ENCODE measurements at regions of chr17 and their contacts with region 1.

Region 1: GRCh38 chr17:75069783-75070182 is 18.0 kb upstream of the SLC16A5 start:
- DNase-seq: peak; percentile 61
- H3K4me3 Mint-ChIP-seq: no peak overlapping the region
- H3K27ac Mint-ChIP-seq: no peak overlapping the region
- H3K4me1 Mint-ChIP-seq: peaks cover 5% of the 10 kb centered on the region
- H3K27me3 Mint-ChIP-seq: no peaks in the 10 kb centered on the region
- CTCF ChIP-seq: peak; percentile 47

Region 2: DNA sequence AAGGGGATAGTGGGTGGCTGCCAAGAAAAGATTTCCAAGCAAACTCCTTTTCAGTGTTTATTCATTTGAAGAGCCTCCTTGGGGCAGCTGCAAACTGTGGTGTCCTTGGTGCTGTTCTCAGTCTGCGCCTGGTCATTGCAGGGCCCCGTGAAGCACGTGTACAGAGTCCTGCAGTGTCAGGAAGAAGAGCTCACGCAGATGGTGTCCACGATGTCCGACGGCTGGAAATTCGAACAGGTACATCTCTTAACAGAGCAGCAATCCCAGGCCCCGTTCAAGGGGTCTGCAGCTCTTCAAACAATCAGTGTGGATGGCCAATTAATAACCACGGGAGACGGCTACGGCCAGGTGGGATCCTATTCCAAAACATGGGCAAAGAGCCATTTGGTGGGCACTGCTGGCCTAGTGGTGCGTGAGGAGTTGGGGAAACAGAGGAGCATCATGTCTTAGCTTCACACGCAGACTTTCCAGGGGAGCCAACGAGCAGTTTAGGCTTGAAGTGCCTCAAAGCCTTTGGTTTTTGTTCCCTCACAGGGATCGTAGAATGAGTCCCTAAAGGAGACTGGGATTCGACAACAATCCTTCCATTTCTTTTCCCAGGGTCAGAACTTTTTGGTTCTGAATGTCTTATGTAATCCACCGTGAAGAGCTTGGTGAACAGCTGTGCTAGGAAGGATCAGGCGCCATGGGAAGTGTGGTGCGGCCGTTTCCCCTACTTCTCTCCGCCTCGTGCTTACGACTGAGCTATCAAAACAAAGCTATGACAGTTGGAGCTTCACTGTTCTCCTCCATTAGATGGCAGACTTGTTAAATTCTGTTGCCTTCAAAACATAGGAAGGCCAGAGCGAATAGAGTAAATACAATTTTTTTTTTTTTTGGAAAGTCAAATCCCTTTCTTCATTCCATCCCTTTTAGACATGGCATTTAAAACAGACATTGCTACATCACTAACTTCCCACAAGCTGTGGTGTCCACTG is 10.1 kb before region 1 on chr17:
- CTCF ChIA-PET with region 1: interaction called, 38 read pairs
- POLR2A ChIA-PET with region 1: interaction called, 8 read pairs
- intact Hi-C with region 1: no loop called
- DNase-seq: no peak
- H3K4me3 Mint-ChIP-seq: no peak overlapping the region
- H3K27ac Mint-ChIP-seq: no peak overlapping the region
- H3K4me1 Mint-ChIP-seq: no peaks in the 10 kb centered on the region
- H3K27me3 Mint-ChIP-seq: no peaks in the 10 kb centered on the region
- CTCF ChIP-seq: peak; percentile 30

Region 3: GRCh38 chr17:75096082-75096625 is 26.4 kb after region 1 on chr17:
- CTCF ChIA-PET with region 1: interaction called, 10 read pairs
- POLR2A ChIA-PET with region 1: interaction called, 17 read pairs
- intact Hi-C with region 1: no loop called
- DNase-seq: peak; percentile 97
- H3K4me3 Mint-ChIP-seq: peak overlapping the region; percentile 62
- H3K27ac Mint-ChIP-seq: peak overlapping the region; percentile 98
- H3K4me1 Mint-ChIP-seq: peaks cover 35% of the 10 kb centered on the region
- H3K27me3 Mint-ChIP-seq: no peaks in the 10 kb centered on the region
- CTCF ChIP-seq: no peak

Region 4: DNA sequence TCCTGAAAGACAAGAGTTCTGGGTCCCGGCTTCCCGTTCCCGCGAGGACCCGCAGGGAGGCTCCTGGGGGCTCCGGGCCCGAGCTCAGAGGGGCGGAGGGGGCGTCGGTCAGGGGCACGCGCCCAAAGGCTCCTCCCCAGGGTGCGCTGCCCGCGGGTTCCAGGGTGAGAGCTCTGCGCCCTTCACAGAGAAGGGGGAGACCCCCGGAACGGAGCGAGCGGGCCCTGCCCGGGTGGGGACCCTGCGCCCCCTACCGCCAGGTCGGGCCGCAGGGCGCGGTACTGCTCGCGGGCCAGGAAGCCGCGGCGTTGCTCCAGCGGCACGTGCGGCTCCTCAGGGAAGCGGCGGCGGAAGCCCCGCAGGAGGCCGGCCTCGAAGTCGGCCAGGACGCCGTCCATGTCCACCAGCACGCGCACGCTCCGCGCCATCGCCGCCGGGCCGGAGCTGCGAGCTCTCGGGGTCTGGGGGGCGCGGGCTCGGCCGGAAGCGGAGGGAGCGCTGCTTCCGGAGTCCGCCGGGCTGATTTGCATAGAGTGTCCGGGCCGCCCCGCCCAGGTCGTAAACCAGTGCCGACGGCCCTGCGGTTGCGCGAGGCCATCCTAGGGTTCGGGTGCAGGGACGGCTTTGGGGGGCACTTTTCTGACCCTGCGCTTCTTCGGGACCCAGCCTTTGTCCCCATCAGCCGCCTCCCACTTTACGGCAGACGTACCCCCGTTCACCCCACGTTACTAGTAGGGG is 61.7 kb after region 1 on chr17 and contains the start of gene NT5C:
- CTCF ChIA-PET with region 1: interaction called, 23 read pairs
- POLR2A ChIA-PET with region 1: interaction called, 7 read pairs
- intact Hi-C with region 1: no loop called
- DNase-seq: peak; percentile 72
- H3K4me3 Mint-ChIP-seq: peak within 1 kb of the TSS; percentile 84
- H3K27ac Mint-ChIP-seq: peak within 1 kb of the TSS; percentile 63
- H3K4me1 Mint-ChIP-seq: peaks cover 7% of the 10 kb centered on the region
- H3K27me3 Mint-ChIP-seq: no peaks in the 10 kb centered on the region
- CTCF ChIP-seq: peak; percentile 79
- total RNA-seq, gene NT5C: 105 and 113 TPM in 2 replicates

Region 5: DNA sequence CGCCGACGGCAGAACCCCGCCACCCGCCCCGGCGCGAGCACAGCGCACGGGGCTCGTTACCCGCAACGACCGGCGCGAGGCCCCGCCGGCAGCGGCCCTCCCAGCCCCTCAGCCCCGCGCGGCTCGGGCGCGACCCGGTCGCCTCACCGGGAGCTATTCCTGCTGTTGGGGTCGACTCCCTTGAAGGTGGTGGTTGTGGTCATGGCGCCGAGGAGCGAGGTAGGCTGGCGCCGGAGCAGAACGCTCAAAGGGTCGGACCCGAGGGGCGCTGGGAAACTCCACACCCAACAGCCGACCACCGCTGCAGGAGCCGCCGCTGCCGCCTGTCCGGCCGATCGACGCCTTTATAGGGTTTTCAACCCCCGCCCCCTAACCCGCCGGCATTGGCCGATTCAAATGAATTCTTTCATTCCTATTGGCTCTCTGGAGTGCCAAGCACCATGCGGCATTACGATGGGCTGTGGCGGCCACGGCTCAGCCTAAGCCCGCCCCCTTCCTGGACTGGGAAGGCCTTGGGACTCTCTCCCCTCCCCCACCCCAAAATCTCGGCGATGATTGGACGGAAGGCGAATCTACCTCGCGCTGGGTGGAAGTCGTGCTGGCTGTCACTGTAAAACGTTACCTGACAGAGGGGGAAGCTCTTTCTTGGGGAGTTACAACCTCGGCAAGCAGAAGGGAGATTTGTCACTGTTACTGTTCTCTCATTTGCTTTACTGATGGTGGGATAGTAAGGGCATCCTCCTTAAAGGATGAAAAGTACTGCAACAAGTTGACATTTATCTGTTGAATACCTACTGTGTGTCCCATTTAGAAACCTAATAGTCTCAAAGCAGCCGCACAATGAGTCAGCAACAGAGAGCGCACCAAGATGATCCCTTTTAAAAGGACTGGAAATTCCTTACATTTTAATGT is 84.7 kb after region 1 on chr17 and contains the start of gene JPT1:
- CTCF ChIA-PET with region 1: interaction called, 4 read pairs
- POLR2A ChIA-PET with region 1: no interaction called
- intact Hi-C with region 1: loop called (anchors 1 kb)
- DNase-seq: peak; percentile 99
- H3K4me3 Mint-ChIP-seq: peak within 1 kb of the TSS; percentile 92
- H3K27ac Mint-ChIP-seq: peak within 1 kb of the TSS; percentile 78
- H3K4me1 Mint-ChIP-seq: peaks cover 10% of the 10 kb centered on the region
- H3K27me3 Mint-ChIP-seq: no peaks in the 10 kb centered on the region
- CTCF ChIP-seq: no peak
- total RNA-seq, gene JPT1: 342 and 360 TPM in 2 replicates

Region 6: GRCh38 chr17:75173526-75173925 is 103.7 kb after region 1 on chr17:
- CTCF ChIA-PET with region 1: interaction called, 13 read pairs
- POLR2A ChIA-PET with region 1: no interaction called
- intact Hi-C with region 1: no loop called
- DNase-seq: no peak
- H3K4me3 Mint-ChIP-seq: no peak overlapping the region
- H3K27ac Mint-ChIP-seq: peak overlapping the region; percentile 75
- H3K4me1 Mint-ChIP-seq: no peaks in the 10 kb centered on the region
- H3K27me3 Mint-ChIP-seq: no peaks in the 10 kb centered on the region
- CTCF ChIP-seq: no peak

Region 7: GRCh38 chr17:75199886-75200618 is 130.3 kb after region 1 on chr17:
- CTCF ChIA-PET with region 1: interaction called, 11 read pairs
- POLR2A ChIA-PET with region 1: interaction called, 5 read pairs
- intact Hi-C with region 1: loop called (anchors 5 kb)
- DNase-seq: no peak
- H3K4me3 Mint-ChIP-seq: no peak overlapping the region
- H3K27ac Mint-ChIP-seq: no peak overlapping the region
- H3K4me1 Mint-ChIP-seq: peaks cover 6% of the 10 kb centered on the region
- H3K27me3 Mint-ChIP-seq: no peaks in the 10 kb centered on the region
- CTCF ChIP-seq: no peak

Measured in MCF 10A (cell line).